AG04450 (cell line): ENCODE measurements at regions of chr7 and their contacts with region 1.

Region 1: GRCh38 chr7:56074371-56074791 is 10.3 kb downstream of the SUMF2 start:
- DNase-seq: peak; percentile 44
- H3K4me3 ChIP-seq: no peak overlapping the region
- H3K27ac ChIP-seq: no peak overlapping the region
- H3K27me3 ChIP-seq: no peaks in the 10 kb centered on the region
- CTCF ChIP-seq: peak; percentile 96

Region 2: DNA sequence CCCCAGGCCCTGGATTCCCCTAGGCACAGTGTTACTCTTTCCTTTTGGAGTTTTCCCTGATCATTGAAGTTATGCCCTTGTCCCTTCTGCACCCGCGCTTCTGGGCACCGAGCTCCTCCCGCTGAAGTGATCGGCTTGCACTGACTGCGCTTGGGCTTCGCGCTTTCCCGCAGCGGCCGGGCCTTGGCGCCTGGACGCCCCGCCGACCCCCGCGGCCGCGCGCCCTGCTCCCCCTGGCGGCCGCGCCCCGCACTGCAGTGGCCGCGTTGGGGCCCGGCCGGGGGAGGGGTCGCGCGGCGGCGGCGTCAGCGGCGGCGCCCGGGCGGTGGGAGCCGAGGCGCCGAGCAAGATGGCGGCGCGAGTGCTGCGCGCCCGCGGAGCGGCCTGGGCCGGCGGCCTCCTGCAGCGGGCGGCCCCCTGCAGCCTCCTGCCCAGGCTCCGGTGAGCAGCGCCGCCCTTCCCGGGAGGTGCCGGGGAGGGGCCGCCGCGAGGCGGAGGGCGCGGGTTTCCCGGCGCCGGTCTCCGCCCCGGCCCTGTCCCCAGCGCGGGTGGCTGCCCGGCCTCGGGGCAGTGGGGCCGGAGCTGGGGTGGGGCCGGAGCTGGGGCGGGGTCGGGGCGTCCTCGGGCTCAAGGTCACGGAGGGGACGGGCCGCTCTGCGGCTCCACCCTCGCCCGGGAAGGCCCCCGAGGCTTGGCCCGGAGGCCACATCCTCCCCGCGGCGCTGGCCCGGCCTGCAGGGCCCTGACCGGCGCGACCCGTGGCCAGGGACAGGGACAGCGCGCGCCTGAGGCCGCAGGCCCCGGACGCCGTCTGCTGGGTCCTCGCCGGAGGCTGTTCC is 109.9 kb before region 1 on chr7 and contains the start of gene NIPSNAP2:
- CTCF ChIA-PET with region 1: interaction called, 11 read pairs
- POLR2A ChIA-PET with region 1: no interaction called
- DNase-seq: no peak
- H3K4me3 ChIP-seq: peak within 1 kb of the TSS; percentile 82
- H3K27ac ChIP-seq: peak within 1 kb of the TSS; percentile 70
- H3K27me3 ChIP-seq: no peaks in the 10 kb centered on the region
- CTCF ChIP-seq: peak; percentile 16; the same call in 1 of the 2 replicates
- polyA plus RNA-seq, gene NIPSNAP2: 61.9 and 90.6 TPM in 2 replicates

Region 3: DNA sequence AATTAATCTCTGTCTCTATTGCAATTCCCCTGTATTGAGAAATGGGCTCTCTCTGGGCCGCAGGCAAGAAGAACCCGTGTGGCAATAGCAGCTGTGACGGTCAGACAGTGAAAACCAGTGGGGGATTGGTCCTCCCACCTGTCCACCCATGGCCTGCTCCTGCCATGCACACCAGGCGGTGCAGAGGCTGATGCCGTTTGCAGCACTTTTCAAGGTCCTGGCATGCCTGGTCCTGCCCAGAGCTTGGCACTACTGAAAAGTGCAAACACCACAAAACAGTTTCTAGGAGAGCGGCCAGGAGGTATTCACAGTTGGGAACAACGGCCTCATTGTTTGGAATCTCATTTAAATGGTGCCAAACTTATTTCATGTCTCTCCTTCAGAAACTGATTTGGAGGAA is 64.7 kb before region 1 on chr7:
- CTCF ChIA-PET with region 1: interaction called, 112 read pairs
- POLR2A ChIA-PET with region 1: interaction called, 4 read pairs
- DNase-seq: no peak
- H3K4me3 ChIP-seq: no peak overlapping the region
- H3K27ac ChIP-seq: no peak overlapping the region
- H3K27me3 ChIP-seq: no peaks in the 10 kb centered on the region
- CTCF ChIP-seq: no peak

Region 4: GRCh38 chr7:56033671-56034432 is 40.5 kb before region 1 on chr7:
- CTCF ChIA-PET with region 1: interaction called, 12 read pairs
- POLR2A ChIA-PET with region 1: no interaction called
- DNase-seq: no peak
- H3K4me3 ChIP-seq: peak overlapping the region; percentile 73
- H3K27ac ChIP-seq: peak overlapping the region; percentile 66
- H3K27me3 ChIP-seq: no peaks in the 10 kb centered on the region
- CTCF ChIP-seq: peak; percentile 42

Region 5: GRCh38 chr7:56051339-56052191 is 22.8 kb before region 1 on chr7 and contains the starts of genes CCT6A and PSPH:
- CTCF ChIA-PET with region 1: interaction called, 23 read pairs
- POLR2A ChIA-PET with region 1: interaction called, 8 read pairs
- DNase-seq: peak; percentile 97
- H3K4me3 ChIP-seq: peak within 1 kb of the TSS; percentile 93
- H3K27ac ChIP-seq: peak within 1 kb of the TSS; percentile 87
- H3K27me3 ChIP-seq: no peaks in the 10 kb centered on the region
- CTCF ChIP-seq: no peak
- polyA plus RNA-seq, gene CCT6A: 214 and 302 TPM in 2 replicates
- polyA plus RNA-seq, gene PSPH: 66.0 and 66.4 TPM in 2 replicates

Region 6: GRCh38 chr7:56092789-56093531 is 18.6 kb after region 1 on chr7 and contains the start of gene PHKG1:
- CTCF ChIA-PET with region 1: interaction called, 23 read pairs
- POLR2A ChIA-PET with region 1: no interaction called
- DNase-seq: peak; percentile 50
- H3K4me3 ChIP-seq: no peak within 1 kb of the TSS
- H3K27ac ChIP-seq: peak within 1 kb of the TSS; percentile 39
- H3K27me3 ChIP-seq: no peaks in the 10 kb centered on the region
- CTCF ChIP-seq: peak; percentile 21; the same call in 1 of the 2 replicates
- polyA plus RNA-seq, gene PHKG1: 0.20 and 0.26 TPM in 2 replicates